Activated CD4-positive, alpha-beta T cell treated with anti-CD3 and anti-CD28 coated beads for 36 hours (primary cell): ENCODE measurements at regions of chr3 and their contacts with region 1.

Region 1: GRCh38 chr3:61919402-61919801 is 358.0 kb downstream of the PTPRG start:
- DNase-seq: no peak
- ATAC-seq: no peak
- H3K4me3 Mint-ChIP-seq: no peak overlapping the region
- H3K27ac Mint-ChIP-seq: no peak overlapping the region
- H3K4me1 Mint-ChIP-seq: no peaks in the 10 kb centered on the region
- H3K27me3 Mint-ChIP-seq: no peaks in the 10 kb centered on the region

Region 2: GRCh38 chr3:61218504-61218903 is 700.9 kb before region 1 on chr3:
- CTCF ChIA-PET with region 1: no interaction called
- POLR2A ChIA-PET with region 1: no interaction called
- intact Hi-C with region 1: loop called in 1 of 2 experiments (anchors 5 kb)
- DNase-seq: no peak
- ATAC-seq: no peak
- H3K4me3 Mint-ChIP-seq: no peak overlapping the region
- H3K27ac Mint-ChIP-seq: no peak overlapping the region
- H3K4me1 Mint-ChIP-seq: no peaks in the 10 kb centered on the region
- H3K27me3 Mint-ChIP-seq: no peaks in the 10 kb centered on the region

Region 3: GRCh38 chr3:61894988-61895935 is 24.1 kb before region 1 on chr3:
- CTCF ChIA-PET with region 1: no interaction called
- POLR2A ChIA-PET with region 1: no interaction called
- intact Hi-C with region 1: no loop called
- DNase-seq: peak; percentile 82
- ATAC-seq: peak; percentile 97
- H3K4me3 Mint-ChIP-seq: no peak overlapping the region
- H3K27ac Mint-ChIP-seq: no peak overlapping the region
- H3K4me1 Mint-ChIP-seq: peaks cover 16% of the 10 kb centered on the region
- H3K27me3 Mint-ChIP-seq: peaks cover 10% of the 10 kb centered on the region